WTC11 (cell line): ENCODE measurements at regions of chr1 and their contacts with region 1.

Region 1: DNA sequence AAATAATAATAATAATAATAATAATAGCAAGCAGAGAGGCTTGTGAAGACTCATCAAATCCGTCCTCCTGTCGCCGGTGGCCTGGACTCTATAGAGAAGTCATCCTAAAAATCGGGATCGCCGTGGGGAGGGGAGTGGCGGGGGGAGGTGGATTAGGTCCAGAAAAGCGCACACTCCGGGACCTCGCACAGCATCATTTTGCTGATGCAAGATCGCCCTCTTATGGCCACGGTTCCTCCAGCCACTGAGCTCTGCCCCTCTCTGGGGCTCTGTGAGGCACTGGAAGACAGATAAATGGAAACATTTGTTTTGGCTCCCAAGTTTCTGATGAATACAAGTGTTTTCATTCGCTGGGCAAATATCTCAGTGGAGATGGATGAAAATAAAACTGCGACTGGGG is 612.0 kb downstream of the MATN1 start:
- DNase-seq: peak; percentile 76
- ATAC-seq: peak; percentile 97
- H3K4me3 Mint-ChIP-seq: no peak overlapping the region
- H3K27ac Mint-ChIP-seq: no peak overlapping the region; the same call in 1 of the 2 replicates
- H3K4me1 Mint-ChIP-seq: 0 out of 2 replicates have a peak, but pooled peaks cover 3% of the 10 kb centered on the region
- H3K27me3 Mint-ChIP-seq: no peaks in the 10 kb centered on the region
- CTCF ChIP-seq: peak; percentile 32; the same call in 1 of the 2 replicates

Region 2: GRCh38 chr1:29698033-29698432 is 413.4 kb before region 1 on chr1:
- CTCF ChIA-PET with region 1: interaction called, 15 read pairs
- POLR2A ChIA-PET with region 1: interaction called, 3 read pairs
- DNase-seq: peak; percentile 70
- ATAC-seq: peak; percentile 93
- H3K4me3 Mint-ChIP-seq: no peak overlapping the region
- H3K27ac Mint-ChIP-seq: no peak overlapping the region; the same call in 1 of the 2 replicates
- H3K4me1 Mint-ChIP-seq: peaks cover 7% of the 10 kb centered on the region
- H3K27me3 Mint-ChIP-seq: no peaks in the 10 kb centered on the region
- CTCF ChIP-seq: peak; percentile 52; the same call in 1 of the 2 replicates

Region 3: DNA sequence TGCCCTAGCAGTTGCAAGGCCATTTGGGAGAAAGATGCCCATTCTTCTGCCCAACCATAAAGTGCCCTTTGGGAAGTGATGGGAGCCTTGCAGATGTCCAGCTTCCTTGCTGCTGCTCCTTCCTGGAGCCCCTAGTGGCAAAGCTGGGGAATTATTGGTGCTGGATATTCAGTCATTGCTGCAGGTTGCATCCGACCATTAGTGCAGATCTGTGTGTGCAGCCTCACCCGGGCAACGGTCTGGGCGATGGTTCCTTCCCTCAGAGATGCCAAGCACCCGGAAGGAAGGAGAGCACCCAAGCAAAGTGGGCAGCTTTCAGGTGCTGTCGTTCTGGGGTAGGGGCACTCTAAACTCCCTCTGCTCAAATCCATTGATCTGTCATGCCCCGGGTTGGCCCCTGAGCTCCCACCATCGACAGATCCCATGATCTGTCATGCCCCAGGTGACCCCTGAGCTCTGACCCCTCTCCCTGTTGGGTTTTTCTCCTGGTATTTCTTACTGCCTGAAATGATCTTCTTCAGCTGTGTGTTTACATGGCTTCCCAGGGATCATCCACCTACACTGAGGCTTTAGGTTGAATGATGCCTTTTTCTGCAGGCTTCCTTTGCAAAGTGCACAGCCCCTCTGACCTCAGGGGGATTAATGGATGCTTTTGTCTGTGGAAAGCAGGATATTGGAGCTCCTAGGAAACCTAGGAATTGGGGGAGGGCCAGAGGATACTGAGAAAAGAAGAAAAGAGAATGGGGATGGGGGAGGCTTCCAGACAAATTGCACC is 407.6 kb before region 1 on chr1:
- CTCF ChIA-PET with region 1: interaction called, 15 read pairs
- POLR2A ChIA-PET with region 1: interaction called, 3 read pairs
- DNase-seq: peak; percentile 43
- ATAC-seq: peak; percentile 37
- H3K4me3 Mint-ChIP-seq: no peak overlapping the region
- H3K27ac Mint-ChIP-seq: no peak overlapping the region
- H3K4me1 Mint-ChIP-seq: peaks cover 23% of the 10 kb centered on the region
- H3K27me3 Mint-ChIP-seq: peaks cover 17% of the 10 kb centered on the region
- CTCF ChIP-seq: peak; percentile 41; the same call in 1 of the 2 replicates

Region 4: DNA sequence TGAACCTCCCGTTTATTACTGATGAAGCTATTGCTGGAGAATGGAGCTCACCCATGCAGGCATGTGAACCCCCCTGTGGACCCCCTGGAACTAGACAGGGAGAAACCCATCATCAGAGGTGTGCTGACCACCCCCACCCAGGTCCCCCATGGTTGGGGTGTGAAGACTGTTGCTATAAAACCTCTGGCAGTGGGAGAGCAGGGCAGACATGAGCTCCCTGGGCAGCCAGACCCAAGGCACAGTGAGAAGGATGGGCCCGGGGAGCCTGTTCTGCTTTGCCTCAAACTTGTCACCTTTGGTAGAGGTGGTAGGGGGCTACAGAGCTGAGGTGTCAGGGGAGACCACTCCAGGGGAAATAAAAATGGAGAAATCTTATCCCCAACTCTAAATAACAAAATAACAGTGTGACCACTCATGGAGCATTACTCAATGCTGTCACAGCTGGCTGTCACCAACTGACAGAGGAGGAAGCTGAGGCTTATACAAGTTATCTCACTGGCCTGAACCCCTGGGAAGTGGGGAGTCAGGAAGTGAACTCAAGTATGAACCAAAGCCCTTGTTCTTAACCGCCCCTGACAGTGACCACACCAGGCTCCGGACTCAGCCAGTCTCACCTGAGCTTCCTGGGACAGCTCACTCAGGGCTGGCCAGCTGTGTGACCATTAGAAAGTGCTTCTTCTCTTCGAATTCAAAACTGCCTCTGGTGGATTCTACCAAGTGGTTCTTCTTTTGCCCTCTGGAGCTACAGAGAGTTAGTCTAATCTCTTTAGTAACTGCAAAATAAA is 86.8 kb before region 1 on chr1:
- CTCF ChIA-PET with region 1: no interaction called
- POLR2A ChIA-PET with region 1: no interaction called
- DNase-seq: no peak
- ATAC-seq: no peak
- H3K4me3 Mint-ChIP-seq: no peak overlapping the region
- H3K27ac Mint-ChIP-seq: no peak overlapping the region
- H3K4me1 Mint-ChIP-seq: no peaks in the 10 kb centered on the region
- H3K27me3 Mint-ChIP-seq: no peaks in the 10 kb centered on the region
- CTCF ChIP-seq: no peak

Region 5: DNA sequence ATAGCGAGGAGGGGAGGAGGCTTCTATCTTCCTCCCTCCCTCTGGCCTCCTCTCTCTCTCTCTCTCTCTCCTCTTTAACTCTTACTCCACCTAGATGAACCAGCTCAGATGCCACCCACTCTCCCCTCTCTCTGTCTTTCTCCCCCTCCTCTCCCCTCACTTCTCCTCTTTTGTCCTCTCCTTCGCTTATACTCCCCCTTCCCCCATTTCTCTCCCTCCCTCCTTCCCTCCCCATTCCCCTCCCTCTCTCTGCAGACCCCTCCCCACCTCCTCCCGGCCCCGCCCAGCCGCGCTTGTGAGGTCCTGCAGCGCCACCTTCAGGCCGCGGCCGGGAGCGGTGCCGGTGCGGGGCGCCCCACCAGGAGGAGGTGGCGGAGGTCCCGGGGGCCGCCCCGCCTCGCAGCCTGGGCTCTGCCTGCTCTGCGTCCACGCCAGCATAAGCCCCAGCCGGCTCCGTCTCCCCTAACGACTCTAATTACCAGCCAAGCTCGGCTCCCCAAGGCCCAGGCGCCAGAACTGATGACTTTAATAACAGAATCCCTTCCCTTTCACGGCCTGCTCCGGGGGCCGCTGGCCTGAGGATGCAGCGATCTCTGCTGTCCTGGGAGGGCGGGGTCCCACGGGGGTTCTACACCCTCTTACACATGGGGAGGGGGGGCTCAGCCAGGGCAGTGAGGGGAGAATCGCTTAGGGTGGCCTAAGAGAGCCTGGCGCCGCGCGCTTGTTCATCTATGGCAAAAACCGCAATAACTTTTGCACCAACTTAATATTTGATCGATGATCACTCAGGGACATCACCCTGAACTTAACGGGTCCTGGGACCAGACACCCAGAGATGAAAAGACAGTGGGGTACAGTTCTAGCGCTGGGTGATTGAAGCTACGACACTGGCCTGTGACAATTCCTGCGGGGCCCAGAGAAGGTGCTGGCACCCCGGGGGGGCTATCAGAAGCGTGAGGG is 25.3 kb before region 1 on chr1:
- CTCF ChIA-PET with region 1: interaction called, 16 read pairs
- POLR2A ChIA-PET with region 1: no interaction called
- DNase-seq: peak; percentile 94
- ATAC-seq: peak; percentile 74
- H3K4me3 Mint-ChIP-seq: peak overlapping the region; percentile 61
- H3K27ac Mint-ChIP-seq: no peak overlapping the region
- H3K4me1 Mint-ChIP-seq: peaks cover 15% of the 10 kb centered on the region
- H3K27me3 Mint-ChIP-seq: peaks cover 3% of the 10 kb centered on the region
- CTCF ChIP-seq: peak; percentile 80

Region 6: GRCh38 chr1:30184393-30185141 is 73.1 kb after region 1 on chr1:
- CTCF ChIA-PET with region 1: no interaction called
- POLR2A ChIA-PET with region 1: no interaction called
- DNase-seq: no peak
- ATAC-seq: no peak
- H3K4me3 Mint-ChIP-seq: no peak overlapping the region
- H3K27ac Mint-ChIP-seq: no peak overlapping the region
- H3K4me1 Mint-ChIP-seq: no peaks in the 10 kb centered on the region
- H3K27me3 Mint-ChIP-seq: no peaks in the 10 kb centered on the region
- CTCF ChIP-seq: no peak

Region 7: GRCh38 chr1:30707412-30708360 is 596.3 kb after region 1 on chr1:
- CTCF ChIA-PET with region 1: interaction called, 12 read pairs
- POLR2A ChIA-PET with region 1: no interaction called
- DNase-seq: peak; percentile 88
- ATAC-seq: peak; percentile 92
- H3K4me3 Mint-ChIP-seq: no peak overlapping the region
- H3K27ac Mint-ChIP-seq: no peak overlapping the region
- H3K4me1 Mint-ChIP-seq: peaks cover 3% of the 10 kb centered on the region; the same call in 1 of the 2 replicates
- H3K27me3 Mint-ChIP-seq: peaks cover 2% of the 10 kb centered on the region; the same call in 1 of the 2 replicates
- CTCF ChIP-seq: peak; percentile 73